Psoas muscle (tissue), 8 donors: ENCODE measurements at regions of chr9 and their contacts with region 1.

Region 1: GRCh38 chr9:137114610-137115391 is at the start of gene DPP7:
- DNase-seq: peak; percentile 77 to 87
- ATAC-seq: peak; percentile 83 to 95 (median 92)
- H3K4me3 ChIP-seq: peak within 1 kb of the TSS; percentile 81
- H3K27ac ChIP-seq: peak within 1 kb of the TSS; percentile 49
- H3K4me1 ChIP-seq: peaks cover 5% of the 10 kb centered on the region
- H3K27me3 ChIP-seq: no peaks in the 10 kb centered on the region
- CTCF ChIP-seq: no peak
- total RNA-seq, gene DPP7: 43.2 to 75.3 (median 67.5) TPM

Region 2: DNA sequence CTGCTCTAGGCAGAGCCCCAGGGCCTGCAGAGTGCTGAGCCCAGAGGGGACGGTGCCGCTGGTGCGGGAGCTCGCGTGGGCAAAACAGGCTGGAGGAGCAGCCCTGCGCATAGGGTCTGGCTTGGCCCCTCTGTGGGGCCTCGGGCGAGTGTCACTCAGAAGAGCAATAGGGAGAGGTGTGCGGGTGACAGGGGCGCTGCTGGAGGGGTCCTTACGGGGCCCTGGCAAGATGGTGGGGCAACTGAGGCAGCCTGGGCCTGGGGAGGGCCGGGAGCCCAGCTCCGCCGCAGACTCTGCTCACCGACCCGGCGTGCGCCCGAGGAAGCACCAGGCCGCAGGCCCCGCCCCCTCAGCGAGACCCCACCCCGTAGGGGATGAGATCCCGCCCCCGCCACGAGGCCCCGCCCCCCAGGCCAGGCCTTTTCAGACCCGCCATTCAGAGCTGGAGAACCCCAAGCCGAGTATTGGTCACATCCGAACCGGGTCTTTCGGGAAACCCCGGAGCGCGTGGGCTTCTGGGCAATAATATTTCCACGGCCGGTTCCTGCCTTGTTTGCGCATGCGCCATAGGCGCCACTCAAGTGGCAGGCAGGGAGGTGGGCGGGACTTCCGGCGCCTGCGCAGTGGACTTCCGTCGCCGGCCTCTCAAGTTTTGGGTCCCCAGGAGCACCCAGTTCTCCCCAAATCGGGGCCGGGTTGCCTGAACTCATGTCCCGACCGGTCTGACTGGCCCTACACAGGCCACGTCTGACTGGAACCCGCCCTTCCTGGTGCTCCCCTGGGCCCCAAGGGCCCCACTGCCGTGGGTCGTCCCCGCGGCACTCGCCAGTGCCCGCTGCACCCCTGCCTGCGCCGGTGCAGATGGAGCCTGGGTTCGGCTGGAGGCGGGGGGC is 108.5 kb after region 1 on chr9:
- intact Hi-C with region 1: loop called in 1 of 2 experiments (anchors 2 kb)
- DNase-seq: peak; percentile 98 to 99
- ATAC-seq: peak; percentile 92 to 93 (median 92)
- H3K4me3 ChIP-seq: peak overlapping the region; percentile 76
- H3K27ac ChIP-seq: peak overlapping the region; percentile 83
- H3K4me1 ChIP-seq: peaks cover 11% of the 10 kb centered on the region
- H3K27me3 ChIP-seq: peaks cover 0 to 12% (median 0%) of the 10 kb centered on the region in 3 donors
- CTCF ChIP-seq: no peak